ENCODE measurements at regions of chr21 and their contacts with region 1.

Region 1: DNA sequence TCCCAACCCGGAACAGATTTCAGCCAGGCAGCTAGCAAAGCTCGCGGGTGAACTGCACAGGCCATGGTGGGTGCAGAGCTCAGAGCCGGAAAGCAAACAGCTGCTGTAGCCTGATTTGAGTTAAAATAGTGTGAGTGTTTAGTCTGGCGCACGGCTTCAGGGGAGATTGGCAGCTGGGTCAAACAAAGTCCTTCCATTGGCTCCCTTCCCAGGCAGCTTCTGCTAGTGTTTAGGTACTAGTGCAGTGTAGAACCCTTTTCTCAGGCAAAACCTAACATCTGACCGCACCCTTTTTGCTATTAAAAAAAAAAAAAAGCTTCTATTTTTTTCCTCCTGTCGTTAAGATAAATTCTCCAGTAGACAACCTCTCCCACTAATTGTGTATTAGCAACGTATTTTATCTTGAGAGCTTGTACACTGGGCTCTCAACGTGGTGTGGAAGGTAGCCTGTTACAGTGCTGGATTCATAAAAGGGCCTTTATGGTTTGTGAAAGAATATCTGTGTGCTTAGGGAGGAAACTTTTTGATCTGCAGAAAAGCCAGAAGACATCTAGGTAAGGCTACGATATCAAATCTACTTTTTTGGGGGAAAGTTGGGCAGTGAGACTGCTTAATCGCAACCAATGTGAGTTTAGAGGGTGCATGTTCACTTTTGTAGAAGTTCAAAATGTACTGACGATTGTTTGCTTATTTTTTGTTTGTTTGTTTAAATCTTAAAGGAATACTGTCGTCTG is 689.6 kb downstream of the USP25 start:
- DNase-seq: peak; percentile 79
- ATAC-seq: peak; percentile 96

Region 2: DNA sequence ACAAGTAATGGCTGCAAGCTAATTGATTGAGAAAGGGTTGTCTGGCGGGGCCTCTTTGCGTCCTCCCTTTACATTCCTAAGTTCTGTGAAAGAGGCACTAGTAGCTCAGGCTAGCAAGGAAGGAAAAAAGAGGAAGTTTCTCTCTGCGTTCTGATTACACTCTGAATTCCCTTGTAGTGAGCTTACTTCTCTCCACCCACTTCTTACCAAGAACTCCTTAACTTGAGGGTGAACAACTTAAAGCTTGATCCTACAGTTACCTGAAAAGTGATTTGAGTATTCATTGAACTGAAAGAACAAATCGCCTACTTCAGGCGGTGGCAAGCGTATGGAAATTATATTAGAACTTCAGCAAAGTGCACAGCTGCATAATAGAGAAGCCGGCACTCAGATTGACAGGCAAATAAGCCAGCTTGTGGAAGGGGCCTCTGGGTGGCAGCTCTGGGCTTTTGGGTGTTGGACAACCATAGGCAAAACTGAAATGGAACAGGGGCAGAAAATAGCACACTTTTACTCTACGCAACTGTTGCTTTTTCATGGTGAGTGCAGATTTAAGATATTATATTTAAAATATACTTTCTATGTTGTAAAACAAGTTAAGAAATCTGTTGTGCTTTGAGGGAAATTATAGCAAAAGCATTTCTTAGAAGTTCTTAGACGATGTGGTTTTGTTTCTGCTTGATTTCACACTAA is 225.1 kb before region 1 on chr21:
- intact Hi-C with region 1: loop called (anchors 5 kb)
- DNase-seq: peak; percentile 73
- ATAC-seq: peak; percentile 92

Region 3: GRCh38 chr21:16308269-16308668 is 111.1 kb before region 1 on chr21:
- intact Hi-C with region 1: loop called (anchors 5 kb)
- DNase-seq: no peak
- ATAC-seq: peak; percentile 42

Region 4: GRCh38 chr21:16377120-16377658 is 42.2 kb before region 1 on chr21:
- intact Hi-C with region 1: loop called (anchors 2 kb)
- DNase-seq: no peak
- ATAC-seq: peak; percentile 51